ENCODE measurements at regions of chr9 and their contacts with region 1.

Region 1: GRCh38 chr9:36995927-36996705 is 38.0 kb downstream of the PAX5 start:
- H3K4me3 ChIP-seq: no peak overlapping the region
- H3K27ac ChIP-seq: no peak overlapping the region
- H3K4me1 ChIP-seq: no peaks in the 10 kb centered on the region
- CTCF ChIP-seq: peak; percentile 80

Region 2: DNA sequence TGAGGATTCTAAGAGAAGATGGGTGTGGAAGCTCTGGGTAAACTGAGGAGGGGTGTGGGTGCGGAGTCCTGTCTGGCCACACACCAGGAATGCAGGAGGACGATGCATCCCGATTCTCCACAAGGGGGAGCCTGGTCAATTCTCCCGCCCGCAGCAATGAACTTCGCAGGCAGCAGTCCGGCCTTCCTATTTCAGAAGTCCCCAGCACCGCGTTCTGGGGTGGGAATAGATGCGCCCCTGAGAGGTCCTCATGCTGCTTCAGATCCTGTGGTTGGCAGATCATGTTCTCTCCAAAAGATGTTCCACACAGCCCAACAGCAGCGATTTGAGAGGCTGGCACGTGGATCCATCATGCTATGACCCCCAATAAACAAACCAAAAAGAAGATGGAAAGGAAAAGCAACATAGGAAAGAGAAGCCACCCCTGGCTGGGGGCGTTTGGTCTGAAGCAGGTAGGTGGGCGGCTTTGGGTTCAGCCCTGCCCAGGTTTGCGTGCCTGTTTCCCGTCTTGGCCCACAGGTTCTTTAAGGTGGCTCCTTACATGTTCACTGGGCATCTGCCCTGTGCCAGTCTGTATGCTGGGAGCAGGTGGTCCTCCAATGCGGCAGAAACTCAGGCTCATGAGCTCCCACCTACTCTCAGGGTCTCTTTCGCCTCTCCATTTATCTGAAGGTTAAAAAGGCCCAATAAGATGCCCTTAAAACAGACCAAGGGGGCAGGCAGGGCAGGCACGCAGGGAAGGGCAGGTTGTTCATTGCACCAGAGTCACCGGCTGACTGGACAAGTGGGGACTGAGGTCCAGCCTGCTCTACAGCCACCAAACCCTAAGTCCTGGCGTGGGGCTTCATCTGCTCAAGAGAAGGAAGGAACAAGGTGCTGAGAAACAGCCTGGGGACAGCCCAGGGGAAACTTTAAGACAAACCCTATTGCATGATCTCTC is 133.6 kb before region 1 on chr9:
- CTCF ChIA-PET with region 1: interaction called, 39 read pairs
- POLR2A ChIA-PET with region 1: no interaction called
- H3K4me3 ChIP-seq: no peak overlapping the region
- H3K27ac ChIP-seq: no peak overlapping the region
- H3K4me1 ChIP-seq: no peaks in the 10 kb centered on the region
- CTCF ChIP-seq: peak; percentile 35; the same call in 1 of the 2 replicates

Region 3: GRCh38 chr9:36878986-36879982 is 116.8 kb before region 1 on chr9:
- CTCF ChIA-PET with region 1: interaction called, 448 read pairs
- POLR2A ChIA-PET with region 1: no interaction called
- H3K4me3 ChIP-seq: no peak overlapping the region
- H3K27ac ChIP-seq: no peak overlapping the region
- H3K4me1 ChIP-seq: no peaks in the 10 kb centered on the region
- CTCF ChIP-seq: no peak

Region 4: DNA sequence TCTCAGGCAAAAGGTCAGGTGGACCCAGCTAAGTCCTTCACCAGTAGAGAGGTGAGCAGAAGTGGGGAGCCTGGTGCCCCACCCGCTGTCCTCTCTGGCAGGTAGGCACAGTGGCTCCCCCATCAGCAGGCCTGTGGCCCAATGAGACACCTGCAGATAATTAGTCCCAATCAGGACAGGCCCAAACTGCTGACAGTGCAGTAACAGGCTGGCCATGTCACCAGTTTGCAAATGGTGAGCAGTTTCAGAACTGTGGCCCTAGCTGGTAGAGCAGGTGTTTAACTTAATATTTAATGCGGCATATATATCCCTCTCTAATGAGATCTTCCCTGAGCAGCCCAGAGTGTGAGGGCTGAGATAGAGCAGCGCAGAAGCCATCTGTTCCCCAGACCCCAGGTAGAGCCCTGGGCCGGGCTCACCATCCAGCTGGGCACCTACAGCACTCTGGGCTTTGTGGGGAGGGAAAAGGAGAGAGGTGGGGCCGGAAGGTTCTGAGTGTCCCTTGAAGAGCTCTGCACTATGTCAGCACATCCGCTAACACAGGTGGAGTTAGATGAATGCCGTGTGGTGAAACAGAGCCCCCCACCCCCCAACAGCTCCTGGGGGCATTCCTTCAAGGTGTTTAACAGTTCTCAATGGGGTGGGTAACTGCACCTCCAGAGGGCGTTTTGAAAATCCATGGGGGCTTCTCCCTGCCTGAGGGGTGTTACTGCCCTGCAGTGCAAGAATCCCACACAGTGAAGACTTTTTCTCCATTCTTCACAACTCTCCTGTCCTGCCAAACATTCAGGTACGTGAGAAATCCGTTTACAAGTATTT is 82.5 kb before region 1 on chr9:
- CTCF ChIA-PET with region 1: interaction called, 11 read pairs
- POLR2A ChIA-PET with region 1: no interaction called
- H3K4me3 ChIP-seq: no peak overlapping the region
- H3K27ac ChIP-seq: no peak overlapping the region
- H3K4me1 ChIP-seq: peaks cover 8% of the 10 kb centered on the region; the same call in 1 of the 2 replicates
- CTCF ChIP-seq: no peak

Region 5: DNA sequence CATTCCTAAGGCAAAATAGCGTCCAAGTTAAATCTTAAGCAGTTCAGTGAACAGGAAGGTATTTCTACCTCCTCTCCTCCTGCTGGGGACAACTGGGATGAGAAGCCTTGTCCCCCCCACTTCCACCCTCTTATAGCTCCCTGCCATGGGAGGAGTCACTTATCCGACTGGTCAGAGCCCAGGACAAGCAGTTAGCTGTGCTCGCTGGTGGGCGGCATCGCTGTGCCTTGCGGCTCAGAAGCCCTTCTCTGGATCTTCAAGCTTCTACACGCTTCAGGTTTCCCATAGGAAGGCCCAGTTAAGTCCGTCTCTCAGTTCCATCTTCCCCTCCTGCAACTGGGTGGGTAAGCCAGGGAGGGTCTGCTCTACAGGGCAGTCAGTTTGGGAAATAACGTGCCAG is 39.2 kb before region 1 on chr9:
- CTCF ChIA-PET with region 1: interaction called, 16 read pairs
- POLR2A ChIA-PET with region 1: no interaction called
- H3K4me3 ChIP-seq: no peak overlapping the region
- H3K27ac ChIP-seq: no peak overlapping the region
- H3K4me1 ChIP-seq: no peaks in the 10 kb centered on the region
- CTCF ChIP-seq: no peak

Region 6: GRCh38 chr9:37262410-37262809 is 266.3 kb after region 1 on chr9:
- CTCF ChIA-PET with region 1: interaction called, 23 read pairs
- POLR2A ChIA-PET with region 1: no interaction called
- H3K4me3 ChIP-seq: no peak overlapping the region
- H3K27ac ChIP-seq: no peak overlapping the region
- H3K4me1 ChIP-seq: peaks cover 2% of the 10 kb centered on the region; the same call in 1 of the 2 replicates
- CTCF ChIP-seq: peak; percentile 15; the same call in 1 of the 2 replicates

Region 7: DNA sequence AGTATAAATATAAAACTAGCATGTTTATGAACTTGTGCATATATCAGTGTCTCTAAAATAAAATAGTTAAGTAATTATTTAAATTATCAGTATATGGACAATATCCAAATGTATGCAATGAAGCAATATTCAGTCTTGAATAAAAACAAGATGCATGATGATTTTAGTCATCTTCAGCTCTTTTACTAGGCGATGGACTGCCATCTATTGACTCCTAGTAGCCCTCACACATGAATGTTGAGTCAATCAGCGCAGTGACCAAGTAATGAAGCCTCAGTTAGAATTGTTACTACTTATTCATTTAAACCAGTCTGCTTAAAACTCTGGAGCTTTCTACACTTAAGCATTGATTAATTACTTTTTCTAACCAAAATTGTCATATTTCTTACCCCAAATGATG is 333.5 kb after region 1 on chr9:
- CTCF ChIA-PET with region 1: interaction called, 42 read pairs
- POLR2A ChIA-PET with region 1: no interaction called
- H3K4me3 ChIP-seq: no peak overlapping the region
- H3K27ac ChIP-seq: no peak overlapping the region
- H3K4me1 ChIP-seq: peaks cover 5% of the 10 kb centered on the region; the same call in 1 of the 2 replicates
- CTCF ChIP-seq: no peak